ENCODE measurements at regions of chr13 and their contacts with region 1.

Region 1: GRCh38 chr13:50911937-50912795 is 2.6 kb downstream of the RNASEH2B start:
- DNase-seq: peak; percentile 85 to 95 (median 90)
- ATAC-seq: peak; percentile 46
- H3K4me3 ChIP-seq: peak overlapping the region; percentile 94
- H3K4me3 Mint-ChIP-seq: peak overlapping the region; percentile 90
- H3K27ac ChIP-seq: peak overlapping the region; percentile 22 to 93
- H3K27ac Mint-ChIP-seq: peak overlapping the region; percentile 93
- H3K4me1 ChIP-seq: peaks cover 40% of the 10 kb centered on the region
- H3K4me1 Mint-ChIP-seq: peaks cover 60% of the 10 kb centered on the region
- H3K27me3 ChIP-seq: no peaks in the 10 kb centered on the region
- H3K27me3 Mint-ChIP-seq: no peaks in the 10 kb centered on the region
- CTCF ChIP-seq: peak; percentile 88

Region 2: DNA sequence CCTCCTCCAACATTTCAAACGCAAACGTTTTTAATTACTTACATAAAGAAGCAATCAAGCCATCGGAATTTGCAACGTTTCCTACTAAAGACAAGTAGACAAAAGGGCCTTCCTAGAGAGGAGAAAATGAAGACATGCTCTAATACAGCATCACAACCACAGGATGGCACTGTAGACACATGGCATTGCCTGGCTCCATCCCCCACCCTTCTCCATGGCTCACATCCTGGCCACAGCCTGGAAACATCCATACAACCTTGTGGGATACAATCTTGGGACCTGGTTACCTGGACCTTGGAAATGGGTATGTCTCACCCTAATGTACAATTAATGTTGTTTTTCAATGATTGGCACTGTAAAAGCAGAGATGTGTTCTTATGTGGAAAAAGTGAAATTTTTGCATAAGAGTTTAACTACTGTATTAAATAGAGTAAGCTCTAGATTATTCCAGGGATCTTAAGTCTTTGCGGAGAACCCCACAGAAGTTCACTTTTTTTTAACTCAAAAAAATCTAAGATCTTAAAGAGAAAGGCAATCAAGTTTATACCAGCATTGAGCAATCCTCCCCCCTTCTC is 1242.3 kb before region 1 on chr13:
- CTCF ChIA-PET with region 1: no interaction called
- POLR2A ChIA-PET with region 1: no interaction called
- intact Hi-C with region 1: loop called in 1 of 2 experiments (anchors 10 kb)
- DNase-seq: peak in 8 of 14 experiments; percentile 4 to 52 (median 28)
- ATAC-seq: peak; percentile 64
- H3K4me3 ChIP-seq: no peak overlapping the region
- H3K4me3 Mint-ChIP-seq: no peak overlapping the region
- H3K27ac ChIP-seq: no peak overlapping the region
- H3K27ac Mint-ChIP-seq: no peak overlapping the region
- H3K4me1 ChIP-seq: no peaks in the 10 kb centered on the region
- H3K4me1 Mint-ChIP-seq: peaks cover 5% of the 10 kb centered on the region
- H3K27me3 ChIP-seq: no peaks in the 10 kb centered on the region
- H3K27me3 Mint-ChIP-seq: no peaks in the 10 kb centered on the region
- CTCF ChIP-seq: peak; percentile 59

Region 3: DNA sequence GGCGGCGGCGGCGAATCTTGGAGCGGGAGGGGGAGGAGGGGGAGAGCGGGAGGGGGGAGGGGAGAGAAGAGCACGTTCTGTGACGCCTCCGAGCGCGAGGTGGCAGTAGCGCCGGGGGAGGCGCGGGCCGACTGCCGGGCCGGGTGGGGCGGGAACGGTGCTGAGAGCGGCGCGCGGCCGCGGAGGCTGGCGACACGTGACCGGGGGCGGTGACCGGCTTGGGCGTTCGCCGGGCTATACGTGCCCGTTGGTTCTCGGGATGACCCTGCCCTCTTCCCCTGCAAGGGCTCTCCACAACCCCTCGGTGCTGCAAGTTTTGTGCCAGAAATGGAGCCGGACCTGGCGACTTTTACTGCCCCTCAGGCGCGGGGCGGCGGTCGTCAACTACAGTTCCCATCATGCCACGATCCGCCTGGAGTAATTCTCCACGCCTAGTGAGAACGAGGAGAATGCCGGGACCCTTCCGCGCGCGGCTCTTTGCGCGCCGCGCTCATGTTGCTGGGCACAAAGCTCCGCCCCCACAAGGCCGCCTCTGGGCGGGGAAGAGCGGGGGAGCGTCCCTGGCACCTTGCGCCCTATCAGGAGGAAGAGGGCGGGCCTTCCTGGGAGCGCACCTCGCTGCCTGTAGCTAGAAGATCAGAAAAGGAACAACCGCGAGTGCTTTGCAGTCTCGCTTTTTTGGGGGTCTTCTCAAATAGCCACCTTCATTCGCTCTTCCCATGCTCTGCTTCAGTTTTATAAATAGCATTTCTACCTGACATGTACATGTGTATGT is 1119.4 kb before region 1 on chr13 and contains the start of gene KPNA3:
- CTCF ChIA-PET with region 1: no interaction called
- POLR2A ChIA-PET with region 1: interaction called, 7 read pairs
- intact Hi-C with region 1: loop called (anchors 5 to 10 kb)
- DNase-seq: peak; percentile 90 to 98 (median 94)
- ATAC-seq: peak; percentile 89
- H3K4me3 ChIP-seq: peak within 1 kb of the TSS; percentile 84
- H3K4me3 Mint-ChIP-seq: peak within 1 kb of the TSS; percentile 100
- H3K27ac ChIP-seq: peak within 1 kb of the TSS; percentile 83 to 92
- H3K27ac Mint-ChIP-seq: peak within 1 kb of the TSS; percentile 95
- H3K4me1 ChIP-seq: peaks cover 22% of the 10 kb centered on the region
- H3K4me1 Mint-ChIP-seq: peaks cover 41% of the 10 kb centered on the region
- H3K27me3 ChIP-seq: no peaks in the 10 kb centered on the region
- H3K27me3 Mint-ChIP-seq: peaks cover 9% of the 10 kb centered on the region
- CTCF ChIP-seq: no peak
- total RNA-seq, gene KPNA3: 15.7 to 17.3 TPM

Region 4: GRCh38 chr13:49976314-49977258 is 935.6 kb before region 1 on chr13:
- CTCF ChIA-PET with region 1: interaction called, 22 read pairs
- POLR2A ChIA-PET with region 1: interaction called, 10 read pairs
- intact Hi-C with region 1: loop called (anchors 1 kb)
- DNase-seq: peak; percentile 65 to 91 (median 74)
- ATAC-seq: peak; percentile 90
- H3K4me3 ChIP-seq: no peak overlapping the region
- H3K4me3 Mint-ChIP-seq: no peak overlapping the region
- H3K27ac ChIP-seq: no peak overlapping the region
- H3K27ac Mint-ChIP-seq: no peak overlapping the region
- H3K4me1 ChIP-seq: no peaks in the 10 kb centered on the region
- H3K4me1 Mint-ChIP-seq: peaks cover 4% of the 10 kb centered on the region
- H3K27me3 ChIP-seq: no peaks in the 10 kb centered on the region
- H3K27me3 Mint-ChIP-seq: no peaks in the 10 kb centered on the region
- CTCF ChIP-seq: peak; percentile 97

Region 5: GRCh38 chr13:50081679-50082425 is 830.3 kb before region 1 on chr13:
- CTCF ChIA-PET with region 1: interaction called, 11 read pairs
- POLR2A ChIA-PET with region 1: interaction called, 34 read pairs
- intact Hi-C with region 1: loop called (anchors 2 kb)
- DNase-seq: peak; percentile 97 to 99 (median 98)
- ATAC-seq: peak; percentile 70
- H3K4me3 ChIP-seq: peak overlapping the region; percentile 78
- H3K4me3 Mint-ChIP-seq: peak overlapping the region; percentile 98
- H3K27ac ChIP-seq: peak overlapping the region; percentile 47 to 77
- H3K27ac Mint-ChIP-seq: peak overlapping the region; percentile 91
- H3K4me1 ChIP-seq: peaks cover 27% of the 10 kb centered on the region
- H3K4me1 Mint-ChIP-seq: peaks cover 58% of the 10 kb centered on the region
- H3K27me3 ChIP-seq: no peaks in the 10 kb centered on the region
- H3K27me3 Mint-ChIP-seq: peaks cover 24% of the 10 kb centered on the region
- CTCF ChIP-seq: no peak

Region 6: GRCh38 chr13:50531917-50532899 is 380.0 kb before region 1 on chr13:
- CTCF ChIA-PET with region 1: interaction called, 3 read pairs
- POLR2A ChIA-PET with region 1: no interaction called
- intact Hi-C with region 1: loop called (anchors 2 to 10 kb)
- DNase-seq: peak in 3 of 14 experiments; percentile 23 to 37 (median 26)
- ATAC-seq: no peak
- H3K4me3 ChIP-seq: no peak overlapping the region
- H3K4me3 Mint-ChIP-seq: no peak overlapping the region
- H3K27ac ChIP-seq: no peak overlapping the region
- H3K27ac Mint-ChIP-seq: no peak overlapping the region
- H3K4me1 ChIP-seq: peaks cover 12% of the 10 kb centered on the region
- H3K4me1 Mint-ChIP-seq: peaks cover 25% of the 10 kb centered on the region
- H3K27me3 ChIP-seq: no peaks in the 10 kb centered on the region
- H3K27me3 Mint-ChIP-seq: no peaks in the 10 kb centered on the region
- CTCF ChIP-seq: peak; percentile 42

Region 7: DNA sequence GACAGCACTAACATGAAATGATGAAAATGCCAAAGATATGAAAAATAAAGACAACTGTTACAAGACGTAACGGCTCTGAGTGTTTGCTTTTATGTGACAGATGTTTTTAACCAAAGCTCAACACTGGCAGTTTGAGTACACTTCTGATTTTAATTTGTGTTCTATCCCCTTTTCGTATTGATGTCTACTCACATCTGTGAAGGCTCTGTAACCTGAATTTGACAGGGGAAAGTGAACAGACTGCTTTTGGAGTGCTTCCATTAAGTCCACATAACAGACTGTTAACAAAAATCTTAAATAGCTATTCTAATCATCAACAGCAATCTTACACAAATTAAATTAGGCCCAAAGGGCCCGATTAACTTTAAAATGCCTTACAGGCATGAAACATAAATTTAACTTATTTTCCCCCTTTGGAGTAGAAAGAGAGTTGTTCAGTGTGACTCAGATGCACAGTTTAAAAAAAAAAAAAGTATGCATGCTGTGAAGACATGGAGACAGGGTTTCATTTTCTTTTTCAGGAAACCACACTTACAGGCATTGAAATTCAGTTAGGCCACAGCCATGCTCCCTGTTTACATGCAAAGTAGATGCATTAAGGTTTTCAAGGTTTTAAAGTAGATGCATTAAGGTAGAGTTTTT is 18.8 kb before region 1 on chr13:
- CTCF ChIA-PET with region 1: interaction called, 7 read pairs
- POLR2A ChIA-PET with region 1: interaction called, 113 read pairs
- intact Hi-C with region 1: loop called in 1 of 2 experiments (anchors 1 kb)
- DNase-seq: peak in 5 of 14 experiments; percentile 22 to 83 (median 71)
- ATAC-seq: peak; percentile 92
- H3K4me3 ChIP-seq: peak overlapping the region; percentile 28
- H3K4me3 Mint-ChIP-seq: peak overlapping the region; percentile 83
- H3K27ac ChIP-seq: peak overlapping the region; percentile 66 to 81
- H3K27ac Mint-ChIP-seq: peak overlapping the region; percentile 84
- H3K4me1 ChIP-seq: peaks cover 19% of the 10 kb centered on the region
- H3K4me1 Mint-ChIP-seq: peaks cover 43% of the 10 kb centered on the region
- H3K27me3 ChIP-seq: no peaks in the 10 kb centered on the region
- H3K27me3 Mint-ChIP-seq: no peaks in the 10 kb centered on the region
- CTCF ChIP-seq: no peak

Measured in CD4-positive, alpha-beta T cell (primary cell).